Breast epithelium (tissue), 4 donors: ENCODE measurements at regions of chr5 and their contacts with region 1.

Region 1: DNA sequence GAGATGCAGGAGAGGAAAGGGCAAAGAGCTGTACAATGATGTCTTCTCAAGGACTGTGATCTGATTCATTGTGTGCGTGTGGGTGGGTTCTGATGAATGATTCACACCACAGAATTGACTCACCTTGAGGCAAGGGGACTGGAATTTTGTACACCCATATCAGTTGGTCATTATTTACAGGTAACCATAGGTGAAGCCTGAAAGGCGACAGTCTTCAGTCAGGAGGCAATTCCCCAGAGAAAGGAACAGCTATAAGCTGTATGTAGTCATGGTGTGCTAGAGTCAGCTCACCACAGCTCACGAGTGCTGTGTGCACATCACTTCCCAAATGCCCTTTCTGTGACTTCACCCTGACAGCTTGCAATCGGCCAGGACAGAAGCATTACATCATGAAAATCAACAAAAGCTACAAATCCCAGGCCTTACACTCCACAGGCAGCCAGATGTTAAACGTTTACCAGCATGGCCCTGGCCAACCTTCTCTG is 87.6 kb upstream of the RPS23 start:
- DNase-seq: no peak
- H3K4me3 ChIP-seq: no peak overlapping the region
- H3K27ac ChIP-seq: no peak overlapping the region
- H3K4me1 ChIP-seq: no peaks in the 10 kb centered on the region
- H3K27me3 ChIP-seq: no peaks in the 10 kb centered on the region
- CTCF ChIP-seq: no peak
- POLR2A ChIP-seq: no peak

Region 2: GRCh38 chr5:82074950-82075349 is 290.8 kb before region 1 on chr5:
- intact Hi-C with region 1: no loop called
- DNase-seq: no peak
- H3K4me3 ChIP-seq: no peak overlapping the region
- H3K27ac ChIP-seq: no peak overlapping the region
- H3K4me1 ChIP-seq: no peaks in the 10 kb centered on the region
- H3K27me3 ChIP-seq: no peaks in the 10 kb centered on the region
- CTCF ChIP-seq: no peak
- POLR2A ChIP-seq: no peak

Region 3: DNA sequence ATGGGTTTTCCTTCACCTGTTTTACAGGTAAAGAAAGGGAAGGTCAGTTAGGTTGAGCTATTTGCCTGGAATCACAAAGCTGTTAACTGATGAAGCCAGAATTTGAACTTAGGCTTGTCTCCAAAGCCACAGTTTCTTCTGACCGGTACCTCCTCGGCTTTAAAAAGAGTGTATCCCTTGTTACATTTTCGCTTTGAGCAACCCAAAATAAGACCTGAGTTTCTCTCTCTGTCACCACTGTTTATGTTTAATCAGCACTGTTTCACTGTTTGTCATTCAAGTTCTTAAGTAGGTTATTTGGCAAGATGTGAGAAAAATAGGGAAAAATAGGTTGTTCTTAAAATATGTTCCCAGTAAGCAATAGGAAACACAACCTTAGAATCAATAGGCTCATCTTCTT is 1190.4 kb after region 1 on chr5:
- intact Hi-C with region 1: loop called (anchors 5 kb)
- DNase-seq: no peak
- H3K4me3 ChIP-seq: no peak overlapping the region
- H3K27ac ChIP-seq: no peak overlapping the region
- H3K4me1 ChIP-seq: no peaks in the 10 kb centered on the region
- H3K27me3 ChIP-seq: no peaks in the 10 kb centered on the region
- CTCF ChIP-seq: no peak
- POLR2A ChIP-seq: no peak